ENCODE measurements at regions of chr3 and their contacts with region 1.

Region 1: DNA sequence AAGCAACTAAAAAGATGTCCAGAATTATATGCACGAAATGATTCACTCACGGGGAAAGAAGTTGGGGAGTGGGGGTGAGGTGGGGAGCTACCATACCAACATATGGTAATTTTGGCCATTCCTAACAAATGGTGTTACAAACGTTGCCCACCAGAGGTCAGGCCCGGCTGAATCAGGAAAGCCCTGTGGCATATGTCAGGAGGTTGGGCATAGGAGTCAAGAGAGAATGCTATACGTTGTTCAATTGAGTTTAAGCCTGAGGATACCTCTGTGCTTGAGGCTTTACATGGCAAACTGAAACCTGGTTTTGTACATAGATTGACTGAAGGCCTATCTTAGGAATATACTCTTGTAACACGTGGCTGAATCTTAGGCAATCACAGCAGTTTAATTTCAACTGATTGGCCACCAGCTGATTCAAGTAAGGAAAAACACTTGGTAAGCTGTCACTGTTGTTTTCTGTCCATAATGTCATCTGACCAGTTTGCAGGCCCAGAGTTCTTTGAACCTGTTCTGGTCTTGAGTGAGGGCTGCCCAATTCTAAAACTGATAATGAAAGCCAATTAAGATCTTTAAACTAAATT is 23.4 kb upstream of the SLC2A2 start:
- DNase-seq: peak; percentile 71
- H3K27ac ChIP-seq: no peak overlapping the region
- CTCF ChIP-seq: peak; percentile 61

Region 2: GRCh38 chr3:171566803-171567422 is 517.0 kb after region 1 on chr3:
- CTCF ChIA-PET with region 1: interaction called, 11 read pairs
- POLR2A ChIA-PET with region 1: no interaction called
- DNase-seq: peak; percentile 52
- H3K27ac ChIP-seq: no peak overlapping the region
- CTCF ChIP-seq: peak; percentile 78